Spleen (tissue), 13 donors: ENCODE measurements at regions of chr2 and their contacts with region 1.

Region 1: GRCh38 chr2:3518496-3519254 is 656 bp downstream of the ADI1 start:
- DNase-seq: peak; percentile 98
- H3K4me3 ChIP-seq: peak overlapping the region; percentile 73 to 96 (median 78)
- H3K27ac ChIP-seq: peak overlapping the region; percentile 93 to 100 (median 98)
- H3K4me1 ChIP-seq: peaks cover 15 to 55% (median 33%) of the 10 kb centered on the region in 6 donors
- H3K27me3 ChIP-seq: no peaks in the 10 kb centered on the region
- CTCF ChIP-seq: no peak
- POLR2A ChIP-seq: peak in 2 of 3 donors; percentile 52 to 85

Region 2: DNA sequence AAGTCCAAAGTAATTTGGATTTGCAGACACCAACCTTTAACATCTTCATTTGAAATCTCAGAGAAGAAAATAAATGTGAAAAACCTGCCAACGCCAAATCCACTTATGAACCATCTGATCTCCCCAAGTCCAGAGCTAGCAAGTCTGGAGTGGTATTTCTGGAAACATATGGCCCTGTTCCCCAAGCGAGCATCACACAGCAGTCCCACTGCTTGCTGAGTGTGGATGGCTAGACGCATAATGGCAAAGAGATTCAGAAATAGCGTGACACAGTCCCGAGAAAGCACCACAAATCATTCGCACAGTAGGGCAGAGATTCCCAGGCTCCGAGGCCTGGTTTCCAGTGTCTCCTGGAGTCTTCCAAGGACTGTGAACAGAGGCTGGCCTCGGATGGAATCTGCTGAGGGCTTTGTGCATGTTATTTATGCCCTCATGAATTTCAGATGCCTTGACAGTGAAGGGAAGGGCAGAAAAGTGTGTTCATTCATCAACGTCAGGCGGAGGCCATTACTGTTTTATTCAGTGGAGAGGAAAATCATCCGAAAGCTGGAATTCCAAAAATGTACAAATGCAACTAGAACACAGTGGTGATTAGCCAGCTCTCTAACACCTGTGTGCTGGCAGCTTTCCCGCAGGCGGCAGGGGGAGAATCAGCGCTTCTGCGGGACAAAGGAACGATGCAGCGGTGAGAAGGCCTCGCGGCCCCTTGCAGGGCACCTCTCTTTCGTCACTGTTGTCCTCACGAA is 558.1 kb before region 1 on chr2:
- intact Hi-C with region 1: no loop called
- DNase-seq: no peak
- H3K4me3 ChIP-seq: no peak overlapping the region
- H3K27ac ChIP-seq: no peak overlapping the region
- H3K4me1 ChIP-seq: no peaks in the 10 kb centered on the region
- H3K27me3 ChIP-seq: no peaks in the 10 kb centered on the region
- CTCF ChIP-seq: no peak
- POLR2A ChIP-seq: no peak

Region 3: DNA sequence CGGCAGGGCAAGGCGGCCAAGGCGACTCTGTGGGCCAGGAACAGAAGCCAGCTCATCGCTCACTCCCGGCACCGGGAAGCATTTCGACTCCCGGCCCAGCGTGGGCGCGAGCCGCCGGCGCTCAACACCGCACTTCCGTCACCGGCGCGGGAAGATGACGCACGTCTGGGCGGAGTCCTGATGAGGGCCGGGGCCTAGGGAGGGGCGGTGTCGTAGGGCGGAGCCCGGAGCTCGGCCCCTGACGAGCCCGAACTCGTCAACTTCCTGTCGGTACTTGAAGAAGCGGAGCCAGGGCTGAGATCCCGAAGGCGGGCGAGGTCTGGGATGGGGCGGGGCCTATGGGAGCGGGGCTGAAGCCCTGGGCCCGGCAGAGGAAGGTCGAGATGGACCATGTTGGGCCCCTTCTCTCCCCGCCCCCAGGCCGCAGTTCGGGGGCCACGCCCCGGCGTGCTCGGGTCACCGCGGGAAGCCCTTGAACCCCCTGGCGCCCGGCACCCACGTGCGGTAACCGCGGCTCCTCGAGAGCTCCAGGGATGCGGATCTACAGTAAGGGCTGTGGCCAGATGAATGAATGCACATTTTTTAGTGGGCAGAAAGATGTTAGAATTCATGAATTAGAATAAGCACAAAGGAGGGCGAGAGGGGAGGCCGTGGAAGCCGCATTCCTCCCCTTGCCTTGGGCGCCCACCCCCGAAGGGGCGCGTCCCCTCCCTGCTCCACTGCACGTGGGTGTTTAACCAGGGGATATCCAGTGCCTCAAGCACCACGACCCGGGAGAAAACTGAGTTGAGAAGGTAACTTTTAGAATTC is 39.7 kb after region 1 on chr2 and contains the start of gene RNASEH1:
- intact Hi-C with region 1: loop called (anchors 5 kb)
- DNase-seq: peak; percentile 100
- H3K4me3 ChIP-seq: peak within 1 kb of the TSS; percentile 83 to 100 (median 97)
- H3K27ac ChIP-seq: peak within 1 kb of the TSS; percentile 89 to 97 (median 92)
- H3K4me1 ChIP-seq: peaks cover 11 to 55% (median 35%) of the 10 kb centered on the region in 6 donors
- H3K27me3 ChIP-seq: no peaks in the 10 kb centered on the region
- CTCF ChIP-seq: peak in 2 of 11 experiments; percentile 12 to 33
- POLR2A ChIP-seq: peak in 2 of 3 donors; percentile 65 to 83
- total RNA-seq, gene RNASEH1: 17.9 to 24.7 (median 20.3) TPM

Region 4: DNA sequence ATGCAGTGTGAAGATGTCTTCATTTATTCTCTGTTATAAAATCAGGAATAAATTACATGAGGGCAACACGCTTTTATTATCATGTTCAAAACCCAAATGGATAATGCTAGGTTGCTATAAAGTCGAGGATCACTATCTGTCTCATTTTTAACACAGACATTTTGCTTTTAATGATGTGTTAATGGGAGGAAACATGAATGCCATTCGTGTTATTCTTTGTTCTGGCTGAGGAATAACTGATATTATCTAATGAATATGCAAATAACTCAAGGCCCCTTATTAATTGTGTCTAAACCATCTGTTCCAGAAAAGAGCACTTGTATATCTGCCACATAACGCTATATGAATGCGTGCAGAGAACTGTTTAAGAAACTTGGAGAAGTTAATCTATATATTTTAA is 760.8 kb after region 1 on chr2:
- intact Hi-C with region 1: no loop called
- DNase-seq: no peak
- H3K4me3 ChIP-seq: no peak overlapping the region
- H3K27ac ChIP-seq: no peak overlapping the region
- H3K4me1 ChIP-seq: no peaks in the 10 kb centered on the region
- H3K27me3 ChIP-seq: no peaks in the 10 kb centered on the region
- CTCF ChIP-seq: no peak
- POLR2A ChIP-seq: no peak